ENCODE measurements at regions of chr3 and their contacts with region 1.

Region 1: GRCh38 chr3:27253831-27254230 is 115.4 kb downstream of the NEK10 start:
- DNase-seq: peak; percentile 57
- ATAC-seq: peak; percentile 100
- H3K4me3 Mint-ChIP-seq: no peak overlapping the region
- H3K27ac Mint-ChIP-seq: no peak overlapping the region
- H3K4me1 Mint-ChIP-seq: no peaks in the 10 kb centered on the region
- H3K27me3 Mint-ChIP-seq: no peaks in the 10 kb centered on the region
- CTCF ChIP-seq: no peak

Region 2: DNA sequence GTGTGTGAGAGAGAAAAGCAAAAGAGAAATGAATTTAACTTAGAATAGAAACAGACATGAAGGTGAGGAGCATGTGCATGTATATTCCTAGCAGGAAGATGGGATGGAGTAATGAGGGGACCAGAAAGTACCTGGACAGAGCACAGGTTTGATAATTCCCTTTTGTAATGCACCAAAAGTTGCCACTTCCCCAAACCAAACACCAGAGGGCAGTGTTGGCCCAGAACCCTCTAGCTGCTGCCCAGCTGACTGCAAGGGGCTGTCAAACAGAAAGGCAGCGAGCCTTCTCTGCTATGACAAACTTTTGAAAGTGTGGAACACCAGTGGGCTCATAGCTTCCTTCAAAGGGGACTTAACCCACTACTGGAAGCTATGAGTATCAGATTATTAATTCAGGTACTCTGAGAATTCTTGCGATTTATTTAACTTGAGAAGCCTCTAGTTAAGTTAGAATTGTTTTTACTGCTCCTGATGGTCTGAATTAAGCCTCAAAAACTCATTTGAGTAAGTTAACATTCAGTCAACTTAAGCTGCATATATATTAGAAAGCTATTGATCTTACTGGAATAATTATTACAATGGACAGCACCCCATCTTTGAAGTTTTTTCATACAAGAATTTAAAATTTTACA is 119.5 kb before region 1 on chr3:
- CTCF ChIA-PET with region 1: interaction called, 30 read pairs
- POLR2A ChIA-PET with region 1: no interaction called
- DNase-seq: peak; percentile 76
- ATAC-seq: peak; percentile 94
- H3K4me3 Mint-ChIP-seq: no peak overlapping the region
- H3K27ac Mint-ChIP-seq: no peak overlapping the region
- H3K4me1 Mint-ChIP-seq: no peaks in the 10 kb centered on the region
- H3K27me3 Mint-ChIP-seq: no peaks in the 10 kb centered on the region
- CTCF ChIP-seq: peak; percentile 74

Region 3: GRCh38 chr3:27141668-27142067 is 112.2 kb before region 1 on chr3:
- CTCF ChIA-PET with region 1: interaction called, 22 read pairs
- POLR2A ChIA-PET with region 1: no interaction called
- DNase-seq: peak; percentile 15
- ATAC-seq: peak; percentile 48
- H3K4me3 Mint-ChIP-seq: no peak overlapping the region
- H3K27ac Mint-ChIP-seq: no peak overlapping the region
- H3K4me1 Mint-ChIP-seq: peaks cover 2% of the 10 kb centered on the region; the same call in 1 of the 2 replicates
- H3K27me3 Mint-ChIP-seq: no peaks in the 10 kb centered on the region
- CTCF ChIP-seq: no peak

Region 4: DNA sequence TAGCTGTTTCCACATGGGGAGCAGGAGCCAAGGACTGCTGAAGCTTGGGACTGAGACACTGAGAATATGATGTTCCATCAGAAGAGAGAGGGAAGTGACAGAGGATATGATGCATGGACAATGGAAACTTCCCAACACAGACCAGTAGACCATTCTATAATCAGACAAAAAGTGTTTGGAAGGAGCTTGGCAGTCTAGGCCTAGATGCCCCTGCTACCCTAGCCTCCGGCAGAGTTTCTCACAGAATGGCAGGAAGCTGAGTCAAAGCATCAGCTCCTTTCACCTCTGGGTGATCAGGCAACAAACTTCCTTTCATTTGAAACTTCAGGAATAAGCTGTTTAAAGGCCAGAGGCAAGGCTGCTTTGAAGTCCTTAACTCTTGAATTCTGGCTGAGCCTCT is 106.6 kb before region 1 on chr3:
- CTCF ChIA-PET with region 1: interaction called, 22 read pairs
- POLR2A ChIA-PET with region 1: no interaction called
- DNase-seq: no peak
- ATAC-seq: no peak
- H3K4me3 Mint-ChIP-seq: no peak overlapping the region
- H3K27ac Mint-ChIP-seq: no peak overlapping the region
- H3K4me1 Mint-ChIP-seq: peaks cover 2% of the 10 kb centered on the region; the same call in 1 of the 2 replicates
- H3K27me3 Mint-ChIP-seq: no peaks in the 10 kb centered on the region
- CTCF ChIP-seq: no peak

Region 5: DNA sequence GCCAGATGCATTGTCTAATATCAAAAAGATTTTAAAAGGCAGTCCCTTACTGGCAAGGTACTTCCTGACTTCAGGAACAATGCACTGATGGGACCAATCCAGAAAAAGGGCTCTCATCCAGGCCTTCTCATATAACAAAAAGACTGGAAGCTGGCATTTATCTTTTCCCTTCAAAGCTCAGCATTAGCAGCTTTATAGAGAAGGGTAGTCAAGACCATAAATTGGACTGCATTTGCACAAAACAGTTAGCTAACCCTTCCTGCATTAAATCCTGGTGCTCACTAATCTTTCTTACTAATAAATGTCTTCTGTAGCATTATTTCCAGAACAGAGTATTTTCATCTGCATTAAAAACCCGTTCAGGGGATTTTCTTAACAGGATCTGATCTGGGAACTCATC is 161.4 kb after region 1 on chr3:
- CTCF ChIA-PET with region 1: no interaction called
- POLR2A ChIA-PET with region 1: no interaction called
- DNase-seq: no peak
- ATAC-seq: no peak
- H3K4me3 Mint-ChIP-seq: no peak overlapping the region
- H3K27ac Mint-ChIP-seq: no peak overlapping the region
- H3K4me1 Mint-ChIP-seq: peaks cover 15% of the 10 kb centered on the region
- H3K27me3 Mint-ChIP-seq: no peaks in the 10 kb centered on the region
- CTCF ChIP-seq: no peak

Measured in WTC11 (cell line).